ENCODE measurements at regions of chr11 and their contacts with region 1.

Region 1: DNA sequence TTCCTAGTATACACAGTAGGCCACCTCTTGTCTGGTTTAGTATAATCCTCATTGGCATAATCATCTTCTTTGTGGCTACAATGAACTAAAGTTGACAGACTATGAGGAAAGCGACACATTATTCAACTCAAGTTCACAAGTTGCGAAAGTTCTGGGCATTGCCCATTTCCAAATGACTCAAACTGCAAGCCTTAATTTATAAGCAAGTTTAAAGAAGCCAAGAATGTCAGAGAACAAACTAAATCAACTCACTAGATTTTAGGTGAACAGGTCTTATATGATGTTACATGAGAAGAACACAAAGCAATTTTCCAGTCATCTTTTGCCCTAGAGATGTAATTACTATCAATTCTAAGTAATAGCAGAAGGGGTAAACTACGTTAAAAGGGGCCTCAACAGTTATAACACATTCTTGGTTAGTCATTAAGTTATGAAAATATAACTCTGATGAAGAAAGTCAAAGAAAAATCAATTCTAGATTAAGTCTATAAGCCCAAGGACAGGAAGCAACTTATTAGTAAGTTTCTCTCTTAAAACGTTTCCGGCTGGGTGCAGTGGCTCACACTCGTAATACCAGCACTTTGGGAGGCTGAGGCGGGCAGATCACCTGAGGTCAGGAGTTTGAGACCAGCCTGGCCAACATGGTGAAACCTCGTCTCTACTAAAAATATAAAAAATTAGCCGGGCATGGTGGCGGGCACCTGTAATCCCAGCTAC is 21.5 kb downstream of the PICALM start:
- DNase-seq: no peak
- ATAC-seq: no peak
- H3K4me3 ChIP-seq: no peak overlapping the region
- H3K27ac ChIP-seq: no peak overlapping the region
- H3K4me1 ChIP-seq: peaks cover 2 to 3% of the 10 kb centered on the region in 2 donors
- H3K27me3 ChIP-seq: no peaks in the 10 kb centered on the region

Region 2: GRCh38 chr11:86062719-86063118 is 15.3 kb after region 1 on chr11:
- intact Hi-C with region 1: loop called in 1 of 2 experiments (anchors 2 kb)
- DNase-seq: no peak
- ATAC-seq: no peak
- H3K4me3 ChIP-seq: no peak overlapping the region
- H3K27ac ChIP-seq: no peak overlapping the region
- H3K4me1 ChIP-seq: peaks cover 0 to 4% of the 10 kb centered on the region in 2 donors
- H3K27me3 ChIP-seq: no peaks in the 10 kb centered on the region